ENCODE measurements at regions of chr2 and their contacts with region 1.

Region 1: GRCh38 chr2:42183775-42184174 is 14.6 kb downstream of the EML4 start:
- DNase-seq: peak; percentile 32
- H3K4me3 ChIP-seq: no peak overlapping the region
- H3K27ac ChIP-seq: no peak overlapping the region
- H3K4me1 ChIP-seq: peaks cover 16% of the 10 kb centered on the region
- CTCF ChIP-seq: no peak

Region 2: DNA sequence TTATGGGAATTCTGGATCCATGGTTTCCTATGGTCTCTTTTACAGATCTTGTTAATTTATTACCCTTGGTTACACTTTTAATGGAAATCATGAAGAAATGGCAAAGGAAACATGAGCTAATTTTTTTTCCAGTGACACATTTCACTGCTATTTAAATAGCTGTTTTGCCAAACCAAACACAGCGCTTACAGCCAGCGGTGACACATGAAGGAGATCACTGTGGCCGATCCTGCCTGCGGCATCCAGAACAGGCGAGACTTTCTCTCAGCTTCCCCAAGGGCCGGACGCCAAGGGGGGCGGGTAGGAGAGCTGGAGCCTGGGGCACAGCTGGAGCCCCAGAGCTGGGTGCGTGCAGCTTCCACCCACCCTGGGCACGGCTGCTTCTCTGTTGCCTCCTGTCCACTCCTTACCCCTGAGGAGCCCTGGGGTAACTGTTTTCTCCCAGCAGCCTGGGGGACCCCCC is 217.3 kb before region 1 on chr2:
- CTCF ChIA-PET with region 1: no interaction called
- POLR2A ChIA-PET with region 1: no interaction called
- intact Hi-C with region 1: no loop called
- DNase-seq: no peak
- H3K4me3 ChIP-seq: no peak overlapping the region
- H3K27ac ChIP-seq: no peak overlapping the region
- H3K4me1 ChIP-seq: no peaks in the 10 kb centered on the region
- CTCF ChIP-seq: no peak

Region 3: GRCh38 chr2:42169100-42169873 is 14.5 kb before region 1 on chr2 and contains the start of gene EML4:
- CTCF ChIA-PET with region 1: no interaction called
- POLR2A ChIA-PET with region 1: interaction called, 19 read pairs
- intact Hi-C with region 1: no loop called
- DNase-seq: peak; percentile 91
- H3K4me3 ChIP-seq: peak within 1 kb of the TSS; percentile 82
- H3K27ac ChIP-seq: peak within 1 kb of the TSS; percentile 59
- H3K4me1 ChIP-seq: peaks cover 34% of the 10 kb centered on the region
- CTCF ChIP-seq: no peak
- total RNA-seq, gene EML4: 36.6 and 37.1 TPM in 2 replicates

Region 4: GRCh38 chr2:42274863-42275262 is 91.1 kb after region 1 on chr2:
- CTCF ChIA-PET with region 1: no interaction called
- POLR2A ChIA-PET with region 1: interaction called, 10 read pairs
- intact Hi-C with region 1: no loop called
- DNase-seq: no peak
- H3K4me3 ChIP-seq: no peak overlapping the region
- H3K27ac ChIP-seq: no peak overlapping the region
- H3K4me1 ChIP-seq: no peaks in the 10 kb centered on the region
- CTCF ChIP-seq: no peak

Measured in OCI-LY7 (cell line).